MCF 10A (cell line): ENCODE measurements at regions of chr3 and their contacts with region 1.

Region 1: GRCh38 chr3:197305854-197306253 is 7.4 kb upstream of the DLG1 start:
- DNase-seq: no peak
- H3K4me3 Mint-ChIP-seq: peak overlapping the region; percentile 27
- H3K27ac Mint-ChIP-seq: peak overlapping the region; percentile 20
- H3K4me1 Mint-ChIP-seq: peaks cover 30% of the 10 kb centered on the region
- H3K27me3 Mint-ChIP-seq: no peaks in the 10 kb centered on the region
- CTCF ChIP-seq: no peak

Region 2: DNA sequence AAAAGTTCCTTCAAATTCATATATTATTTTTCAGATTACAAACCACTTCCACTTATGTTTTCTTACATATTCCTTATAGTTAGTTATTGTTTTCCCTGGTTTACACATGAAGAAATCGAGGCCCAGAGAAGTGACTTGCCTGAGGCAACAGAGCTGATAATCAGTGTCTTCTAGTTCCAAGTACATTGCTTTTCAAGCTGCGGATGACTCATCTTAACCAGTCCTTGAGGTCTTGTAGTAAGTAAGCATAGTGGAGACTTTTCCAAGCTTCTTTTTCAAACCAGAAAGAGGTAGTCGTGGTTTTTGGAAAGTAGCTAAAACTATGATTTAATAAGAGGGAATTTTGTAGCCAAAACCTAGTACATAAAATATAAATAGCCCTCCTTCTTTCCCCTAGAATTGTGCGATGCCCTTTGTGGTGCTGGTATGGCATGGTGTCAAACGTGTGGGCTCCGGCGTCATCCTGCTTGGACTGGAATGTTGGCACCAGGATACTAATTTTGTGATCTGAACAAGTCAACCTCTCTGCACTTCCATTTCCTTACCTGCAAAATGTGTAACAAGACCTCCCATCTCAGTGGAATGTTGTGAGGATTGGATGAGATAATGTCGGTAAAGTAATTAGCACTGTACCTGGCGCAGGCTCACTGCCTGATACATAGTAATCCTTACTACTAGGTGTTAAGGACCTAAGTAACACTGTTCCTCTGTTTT is 11.6 kb after region 1 on chr3:
- CTCF ChIA-PET with region 1: interaction called, 4 read pairs
- POLR2A ChIA-PET with region 1: interaction called, 59 read pairs
- intact Hi-C with region 1: no loop called
- DNase-seq: peak; percentile 95
- H3K4me3 Mint-ChIP-seq: peak overlapping the region; percentile 66
- H3K27ac Mint-ChIP-seq: peak overlapping the region; percentile 73
- H3K4me1 Mint-ChIP-seq: peaks cover 25% of the 10 kb centered on the region
- H3K27me3 Mint-ChIP-seq: no peaks in the 10 kb centered on the region
- CTCF ChIP-seq: no peak

Region 3: DNA sequence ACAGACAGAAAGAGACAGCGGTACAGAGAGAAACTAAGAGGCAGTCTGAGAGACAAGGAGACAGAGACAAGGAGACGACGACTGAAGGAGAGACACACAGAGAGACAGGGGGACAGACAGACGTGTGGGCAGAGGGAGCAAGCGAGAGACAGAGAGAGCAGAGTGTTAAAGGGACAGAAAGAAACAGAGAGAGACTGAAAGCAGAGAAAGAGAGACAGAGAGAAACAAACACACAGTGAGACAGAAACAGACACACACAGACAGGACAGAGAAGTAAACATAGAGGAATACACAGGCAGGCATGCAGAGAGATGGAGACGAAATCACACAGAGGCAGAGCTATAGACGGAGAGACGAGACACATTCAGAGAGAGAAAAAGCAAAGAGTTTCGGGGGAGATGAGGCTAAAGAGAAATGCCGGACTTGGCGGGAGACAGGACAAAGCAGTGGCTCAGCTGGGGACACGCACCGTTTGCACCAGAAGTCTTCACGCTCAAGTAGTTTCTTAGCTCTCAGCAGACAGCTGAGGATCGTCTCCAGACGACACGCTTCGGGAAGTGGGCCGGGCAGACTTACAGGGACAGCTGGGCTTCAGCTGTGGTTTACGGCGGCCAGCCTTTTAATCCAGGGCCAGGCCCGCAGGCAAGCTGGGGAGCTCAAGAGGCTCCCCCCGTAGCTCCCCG is 48.6 kb after region 1 on chr3:
- CTCF ChIA-PET with region 1: no interaction called
- POLR2A ChIA-PET with region 1: no interaction called
- intact Hi-C with region 1: no loop called
- DNase-seq: no peak
- H3K4me3 Mint-ChIP-seq: no peak overlapping the region
- H3K27ac Mint-ChIP-seq: no peak overlapping the region
- H3K4me1 Mint-ChIP-seq: peaks cover 12% of the 10 kb centered on the region
- H3K27me3 Mint-ChIP-seq: peaks cover 13% of the 10 kb centered on the region
- CTCF ChIP-seq: no peak

Region 4: GRCh38 chr3:197372047-197372666 is 66.3 kb after region 1 on chr3:
- CTCF ChIA-PET with region 1: interaction called, 3 read pairs
- POLR2A ChIA-PET with region 1: interaction called, 36 read pairs
- intact Hi-C with region 1: loop called (anchors 2 kb)
- DNase-seq: peak; percentile 89
- H3K4me3 Mint-ChIP-seq: peak overlapping the region; percentile 19
- H3K27ac Mint-ChIP-seq: peak overlapping the region; percentile 75
- H3K4me1 Mint-ChIP-seq: peaks cover 44% of the 10 kb centered on the region
- H3K27me3 Mint-ChIP-seq: no peaks in the 10 kb centered on the region
- CTCF ChIP-seq: no peak